CD4-positive, alpha-beta memory T cell (primary cell): ENCODE measurements at regions of chr12 and their contacts with region 1.

Region 1: GRCh38 chr12:113184900-113185773 is at the starts of genes DDX54 and RITA1:
- DNase-seq: peak; percentile 90 to 95 (median 91)
- H3K4me3 ChIP-seq: peak within 1 kb of the TSS; percentile 74 to 91
- H3K4me3 Mint-ChIP-seq: peak within 1 kb of the TSS; percentile 95 to 98 (median 96)
- H3K27ac ChIP-seq: peak within 1 kb of the TSS; percentile 92
- H3K27ac Mint-ChIP-seq: peak within 1 kb of the TSS; percentile 95 to 98 (median 97)
- H3K4me1 ChIP-seq: peaks cover 42% of the 10 kb centered on the region
- H3K4me1 Mint-ChIP-seq: peaks cover 25 to 53% (median 37%) of the 10 kb centered on the region in 4 donors
- H3K27me3 ChIP-seq: no peaks in the 10 kb centered on the region
- H3K27me3 Mint-ChIP-seq: no peaks in the 10 kb centered on the region
- total RNA-seq, gene DDX54: 64.9 to 69.4 TPM
- total RNA-seq, gene RITA1: 12.8 to 14.2 TPM

Region 2: DNA sequence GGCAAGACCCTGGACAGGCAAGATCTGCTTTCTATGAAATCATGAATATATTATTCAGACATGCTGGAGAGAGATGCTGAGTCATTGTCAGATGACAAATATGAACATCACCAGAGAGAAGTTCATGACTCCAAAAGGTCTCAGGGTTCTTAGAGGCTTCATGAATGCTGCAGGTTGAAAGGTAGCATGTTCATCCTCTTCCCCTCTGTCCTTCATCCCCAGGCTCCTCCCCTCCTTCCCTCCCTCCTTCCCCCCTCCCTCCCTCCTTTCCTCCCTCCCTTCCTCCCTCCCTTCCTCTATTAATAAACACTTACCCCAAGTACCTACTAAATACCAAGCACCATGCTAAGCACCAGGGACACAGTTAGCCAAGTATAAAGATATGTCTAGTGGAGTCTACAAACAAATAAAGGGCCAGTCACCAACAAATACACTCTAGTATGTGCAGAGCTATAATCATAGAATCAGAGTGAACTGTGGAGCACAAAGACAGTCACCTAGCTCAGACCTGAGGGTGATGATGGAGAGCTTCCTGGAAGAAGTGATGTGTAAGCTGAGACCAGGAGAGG is 347.4 kb before region 1 on chr12:
- CTCF ChIA-PET with region 1: no interaction called
- POLR2A ChIA-PET with region 1: no interaction called
- intact Hi-C with region 1: no loop called
- DNase-seq: no peak
- H3K4me3 ChIP-seq: no peak overlapping the region
- H3K4me3 Mint-ChIP-seq: no peak overlapping the region
- H3K27ac ChIP-seq: no peak overlapping the region
- H3K27ac Mint-ChIP-seq: no peak overlapping the region
- H3K4me1 ChIP-seq: no peaks in the 10 kb centered on the region
- H3K4me1 Mint-ChIP-seq: no peaks in the 10 kb centered on the region
- H3K27me3 ChIP-seq: no peaks in the 10 kb centered on the region
- H3K27me3 Mint-ChIP-seq: peaks cover 20% of the 10 kb centered on the region in 2 donors

Region 3: DNA sequence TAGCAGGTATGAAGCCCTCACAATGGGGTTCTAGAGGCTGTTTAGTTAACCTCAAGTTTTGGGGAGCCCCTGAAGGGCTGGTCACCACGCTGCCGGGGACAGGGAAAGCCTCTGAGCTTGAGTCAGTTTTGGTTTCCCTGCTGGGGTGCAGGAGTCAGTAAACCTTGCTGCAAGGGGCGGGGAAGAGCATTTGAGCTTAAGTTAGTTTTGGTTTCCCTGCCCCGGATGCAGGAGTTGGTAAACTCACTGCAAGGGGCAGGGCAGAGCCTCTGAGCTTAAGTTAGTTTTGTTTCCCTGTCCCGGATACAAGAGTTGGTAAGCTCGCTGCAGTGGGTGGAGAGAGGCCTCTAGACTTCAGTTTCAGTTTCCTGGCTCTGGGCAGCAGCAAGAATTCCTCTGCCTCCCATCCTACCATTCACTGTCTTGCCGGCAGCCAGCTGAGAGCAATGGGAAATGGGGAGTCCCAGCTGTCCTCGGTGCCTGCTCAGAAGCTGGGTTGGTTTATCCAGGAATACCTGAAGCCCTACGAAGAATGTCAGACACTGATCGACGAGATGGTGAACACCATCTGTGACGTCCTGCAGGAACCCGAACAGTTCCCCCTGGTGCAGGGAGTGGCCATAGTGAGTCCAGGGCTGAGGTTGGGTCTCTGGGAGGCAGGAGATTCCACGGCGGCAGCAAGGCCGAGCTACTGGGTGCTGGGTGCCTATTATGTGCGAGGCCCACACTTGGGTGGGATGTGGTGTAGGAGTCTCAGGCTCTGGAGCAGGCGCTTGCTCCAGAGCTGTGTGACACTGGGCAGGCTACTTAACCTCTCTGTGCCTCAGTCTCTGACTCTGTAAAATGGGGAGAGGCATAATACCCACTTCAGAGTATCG is 206.7 kb before region 1 on chr12 and contains the start of gene OAS2:
- CTCF ChIA-PET with region 1: no interaction called
- POLR2A ChIA-PET with region 1: interaction called, 18 read pairs
- intact Hi-C with region 1: loop called (anchors 5 kb)
- DNase-seq: peak; percentile 82 to 92 (median 87)
- H3K4me3 ChIP-seq: peak within 1 kb of the TSS; percentile 87 to 88
- H3K4me3 Mint-ChIP-seq: peak within 1 kb of the TSS; percentile 88 to 100 (median 99)
- H3K27ac ChIP-seq: peak within 1 kb of the TSS; percentile 91
- H3K27ac Mint-ChIP-seq: peak within 1 kb of the TSS; percentile 97 to 99 (median 99)
- H3K4me1 ChIP-seq: peaks cover 51% of the 10 kb centered on the region
- H3K4me1 Mint-ChIP-seq: peaks cover 28 to 58% (median 45%) of the 10 kb centered on the region in 4 donors
- H3K27me3 ChIP-seq: no peaks in the 10 kb centered on the region
- H3K27me3 Mint-ChIP-seq: no peaks in the 10 kb centered on the region
- total RNA-seq, gene OAS2: 73.5 to 77.4 TPM

Region 4: DNA sequence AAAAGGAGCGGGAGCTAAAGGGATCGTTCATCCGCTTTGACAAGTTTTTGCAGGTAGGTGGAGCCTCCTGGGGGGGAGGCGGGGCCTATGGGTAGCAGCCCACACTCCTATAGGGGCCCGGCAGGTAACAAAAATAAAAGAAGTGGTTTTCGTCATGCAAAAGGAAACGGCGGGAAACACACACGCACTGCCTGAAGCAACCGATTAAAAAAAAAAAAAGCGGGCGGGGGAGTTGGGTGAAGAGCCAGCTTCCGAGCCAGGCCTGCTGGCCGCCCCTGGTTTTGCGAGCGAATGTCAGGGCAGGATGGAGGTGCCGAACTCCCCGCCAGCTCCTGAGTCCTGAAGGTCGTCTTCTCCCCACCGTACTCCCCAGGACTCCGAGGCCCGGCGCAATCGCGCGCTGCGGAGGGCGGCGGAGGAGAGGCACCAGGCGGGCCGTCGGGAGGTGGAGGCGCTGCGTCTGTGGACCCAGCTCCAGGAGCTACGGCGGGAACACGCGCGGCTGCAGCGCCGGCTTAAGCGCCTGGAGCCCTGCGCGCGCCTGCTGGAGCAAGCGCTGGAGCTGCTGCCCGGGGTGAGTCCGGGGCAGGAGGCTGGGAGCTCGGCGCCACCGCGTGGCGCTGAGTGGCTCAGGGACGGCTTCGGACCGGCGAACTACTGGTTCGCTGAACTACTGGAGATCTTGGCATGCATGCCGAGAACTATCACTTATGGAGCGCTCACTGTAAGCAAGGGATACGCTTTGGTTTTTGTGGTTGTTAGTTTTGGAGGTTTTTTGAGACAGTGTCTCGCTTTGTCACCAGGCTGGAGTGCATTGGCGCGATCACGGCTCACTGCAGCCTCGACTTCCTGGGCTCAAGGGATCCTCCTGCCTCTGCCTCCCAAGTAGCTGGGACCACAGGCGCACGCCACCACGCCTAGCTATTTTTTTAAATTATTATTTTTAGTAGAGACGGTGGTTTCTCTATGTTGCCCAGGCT is 32.0 kb before region 1 on chr12:
- CTCF ChIA-PET with region 1: no interaction called
- POLR2A ChIA-PET with region 1: interaction called, 4 read pairs
- intact Hi-C with region 1: loop called (anchors 1 kb)
- DNase-seq: peak; percentile 70 to 85 (median 74)
- H3K4me3 ChIP-seq: peak overlapping the region in 1 of 2 donors; percentile 57
- H3K4me3 Mint-ChIP-seq: peak overlapping the region; percentile 73 to 87 (median 85)
- H3K27ac ChIP-seq: peak overlapping the region; percentile 30
- H3K27ac Mint-ChIP-seq: peak overlapping the region in 6 of 7 donors; percentile 9 to 86 (median 75)
- H3K4me1 ChIP-seq: peaks cover 20% of the 10 kb centered on the region
- H3K4me1 Mint-ChIP-seq: peaks cover 9 to 29% (median 13%) of the 10 kb centered on the region in 4 donors
- H3K27me3 ChIP-seq: peaks cover 6% of the 10 kb centered on the region
- H3K27me3 Mint-ChIP-seq: peaks cover 0 to 9% of the 10 kb centered on the region in 2 donors

Region 5: DNA sequence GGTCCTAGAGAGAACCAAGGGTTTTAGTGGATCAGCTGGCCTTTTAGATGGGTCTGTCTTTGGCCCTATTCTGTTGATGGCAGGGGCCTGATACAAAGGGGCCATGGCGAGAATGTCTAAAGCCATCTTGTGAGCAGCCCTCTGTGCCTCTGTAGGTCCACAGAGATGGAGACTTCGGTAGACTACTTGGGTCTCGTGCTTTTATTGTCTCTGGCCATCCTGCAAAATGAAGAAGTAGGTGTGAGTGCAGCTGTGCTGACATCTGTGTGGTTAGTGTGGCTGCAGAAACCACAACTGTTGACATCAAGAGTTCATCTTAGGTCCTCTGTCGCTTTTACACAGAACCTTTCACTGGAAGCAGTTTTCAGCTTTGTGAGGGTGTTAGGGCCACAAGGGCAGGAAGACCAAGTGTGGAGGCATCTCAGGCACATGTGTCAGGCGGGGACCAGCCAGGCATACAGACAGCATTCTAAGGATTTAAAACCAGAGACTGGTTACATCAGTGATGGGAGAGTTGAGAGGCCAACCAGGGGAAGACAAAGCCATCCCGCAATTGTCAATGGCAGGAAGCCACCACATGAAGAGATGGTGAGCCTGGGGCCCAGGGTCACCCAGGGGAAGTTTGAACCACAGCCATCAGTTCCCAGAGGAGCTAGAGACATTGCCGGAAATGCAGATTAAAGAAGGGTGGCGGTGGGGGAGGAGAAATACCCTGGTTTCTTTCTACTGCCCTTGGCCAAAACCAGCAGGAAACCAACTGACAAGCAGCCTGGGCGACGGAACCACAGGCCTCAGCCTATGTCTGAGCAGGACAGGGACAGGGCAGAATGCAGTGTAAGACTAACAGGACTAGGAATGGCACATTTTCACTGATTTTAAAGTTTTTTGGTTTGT is 23.2 kb after region 1 on chr12:
- CTCF ChIA-PET with region 1: interaction called, 6 read pairs
- POLR2A ChIA-PET with region 1: interaction called, 21 read pairs
- intact Hi-C with region 1: loop called (anchors 1 kb)
- DNase-seq: peak; percentile 68 to 78 (median 73)
- H3K4me3 ChIP-seq: no peak overlapping the region
- H3K4me3 Mint-ChIP-seq: peak overlapping the region; percentile 26 to 83 (median 74)
- H3K27ac ChIP-seq: peak overlapping the region; percentile 40
- H3K27ac Mint-ChIP-seq: peak overlapping the region; percentile 87 to 97 (median 93)
- H3K4me1 ChIP-seq: peaks cover 47% of the 10 kb centered on the region
- H3K4me1 Mint-ChIP-seq: peaks cover 24 to 54% (median 40%) of the 10 kb centered on the region in 4 donors
- H3K27me3 ChIP-seq: no peaks in the 10 kb centered on the region
- H3K27me3 Mint-ChIP-seq: no peaks in the 10 kb centered on the region

Region 6: DNA sequence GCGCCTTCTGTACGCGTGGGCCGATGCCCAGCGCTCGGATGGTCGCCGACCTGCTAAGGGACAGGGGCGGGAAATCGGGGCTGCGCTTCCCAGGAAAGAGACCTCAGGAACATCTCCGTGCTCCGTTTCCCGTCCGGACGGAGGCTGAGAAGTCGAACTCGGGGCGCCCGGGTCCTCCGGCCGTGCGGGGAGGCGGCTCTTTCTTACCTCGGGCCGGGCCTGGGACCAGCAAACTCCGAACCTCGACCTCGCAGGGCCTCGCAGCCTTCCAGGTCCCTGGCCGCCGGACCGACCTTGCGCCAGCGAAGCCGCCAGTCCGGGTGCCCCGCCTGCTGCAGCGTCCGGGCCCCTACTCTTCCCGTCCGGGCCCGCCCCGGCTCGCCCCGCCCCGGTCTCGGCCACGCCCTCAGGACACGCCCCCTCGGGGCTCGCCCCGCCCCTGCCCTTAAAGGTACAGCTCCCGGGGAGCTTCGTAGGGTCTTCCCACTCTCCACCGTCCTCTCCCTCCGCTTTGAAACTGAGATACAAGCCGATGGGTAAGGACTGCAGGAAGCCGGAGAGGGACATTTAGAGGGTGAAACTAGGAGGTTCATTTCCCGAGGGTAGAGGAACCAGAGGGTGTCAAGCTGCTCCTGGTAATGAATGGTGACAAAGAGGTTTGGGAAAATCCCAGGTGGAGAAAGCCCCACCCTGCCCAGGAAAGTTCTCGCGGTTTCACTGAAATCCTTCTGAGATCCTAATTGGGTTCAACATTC is 149.8 kb after region 1 on chr12 and contains the start of gene SLC8B1:
- CTCF ChIA-PET with region 1: no interaction called
- POLR2A ChIA-PET with region 1: interaction called, 10 read pairs
- intact Hi-C with region 1: loop called (anchors 1 kb)
- DNase-seq: peak; percentile 75 to 85 (median 76)
- H3K4me3 ChIP-seq: peak within 1 kb of the TSS; percentile 69 to 79
- H3K4me3 Mint-ChIP-seq: peak within 1 kb of the TSS; percentile 92 to 99 (median 98)
- H3K27ac ChIP-seq: peak within 1 kb of the TSS; percentile 50
- H3K27ac Mint-ChIP-seq: peak within 1 kb of the TSS; percentile 84 to 96 (median 89)
- H3K4me1 ChIP-seq: peaks cover 21% of the 10 kb centered on the region
- H3K4me1 Mint-ChIP-seq: peaks cover 19 to 52% (median 36%) of the 10 kb centered on the region in 4 donors
- H3K27me3 ChIP-seq: no peaks in the 10 kb centered on the region
- H3K27me3 Mint-ChIP-seq: no peaks in the 10 kb centered on the region
- total RNA-seq, gene SLC8B1: 91.2 to 93.5 TPM